Prostate gland (tissue), 2 donors: ENCODE measurements at regions of chr20 and their contacts with region 1.

Region 1: GRCh38 chr20:9609887-9610502 is 95.6 kb downstream of the LAMP5 start:
- DNase-seq: peak; percentile 51
- H3K4me3 ChIP-seq: no peak overlapping the region
- H3K27ac ChIP-seq: no peak overlapping the region
- H3K4me1 ChIP-seq: no peaks in the 10 kb centered on the region
- H3K27me3 ChIP-seq: no peaks in the 10 kb centered on the region
- CTCF ChIP-seq: peak in 3 of 4 experiments; percentile 65 to 84 (median 67)
- POLR2A ChIP-seq: no peak

Region 2: GRCh38 chr20:9344083-9344920 is 265.7 kb before region 1 on chr20:
- intact Hi-C with region 1: no loop called
- DNase-seq: no peak
- H3K4me3 ChIP-seq: no peak overlapping the region
- H3K27ac ChIP-seq: peak overlapping the region in 1 of 2 donors; percentile 2
- H3K4me1 ChIP-seq: peaks cover 2% of the 10 kb centered on the region
- H3K27me3 ChIP-seq: no peaks in the 10 kb centered on the region
- CTCF ChIP-seq: no peak
- POLR2A ChIP-seq: no peak

Region 3: GRCh38 chr20:9407805-9408421 is 202.1 kb before region 1 on chr20:
- intact Hi-C with region 1: loop called (anchors 2 kb)
- DNase-seq: peak; percentile 53
- H3K4me3 ChIP-seq: no peak overlapping the region
- H3K27ac ChIP-seq: no peak overlapping the region
- H3K4me1 ChIP-seq: no peaks in the 10 kb centered on the region
- H3K27me3 ChIP-seq: no peaks in the 10 kb centered on the region
- CTCF ChIP-seq: peak; percentile 74 to 89 (median 84)
- POLR2A ChIP-seq: no peak